ENCODE measurements at regions of chr11 and their contacts with region 1.

Region 1: GRCh38 chr11:74388678-74389327 is 9.4 kb downstream of the PGM2L1 start:
- DNase-seq: peak; percentile 67
- H3K4me3 Mint-ChIP-seq: no peak overlapping the region
- H3K27ac Mint-ChIP-seq: no peak overlapping the region
- H3K4me1 Mint-ChIP-seq: peaks cover 21% of the 10 kb centered on the region
- H3K27me3 Mint-ChIP-seq: no peaks in the 10 kb centered on the region

Region 2: GRCh38 chr11:74345420-74345819 is 43.4 kb before region 1 on chr11:
- CTCF ChIA-PET with region 1: no interaction called
- POLR2A ChIA-PET with region 1: no interaction called
- DNase-seq: no peak
- H3K4me3 Mint-ChIP-seq: no peak overlapping the region
- H3K27ac Mint-ChIP-seq: no peak overlapping the region
- H3K4me1 Mint-ChIP-seq: peaks cover 2% of the 10 kb centered on the region
- H3K27me3 Mint-ChIP-seq: no peaks in the 10 kb centered on the region

Region 3: DNA sequence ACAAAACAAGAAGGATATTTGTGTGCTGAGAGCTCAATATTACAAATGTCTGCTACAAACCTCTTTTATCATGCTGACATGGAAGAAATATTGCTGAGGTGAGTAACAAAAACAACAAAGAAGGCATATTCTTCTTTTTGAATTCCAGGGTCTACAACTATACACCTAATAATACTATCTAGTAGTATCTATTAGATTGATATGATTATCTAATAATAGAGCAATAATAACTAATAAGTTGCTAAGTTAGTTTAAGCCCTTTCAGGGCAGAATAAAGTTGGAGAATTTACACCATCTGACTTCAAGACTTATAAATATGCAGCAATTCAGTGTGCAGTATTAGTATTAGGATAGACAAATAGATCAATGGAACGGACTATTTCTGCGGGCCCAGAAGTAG is 20.8 kb after region 1 on chr11:
- CTCF ChIA-PET with region 1: interaction called, 11 read pairs
- POLR2A ChIA-PET with region 1: no interaction called
- DNase-seq: no peak
- H3K4me3 Mint-ChIP-seq: no peak overlapping the region
- H3K27ac Mint-ChIP-seq: no peak overlapping the region
- H3K4me1 Mint-ChIP-seq: no peaks in the 10 kb centered on the region
- H3K27me3 Mint-ChIP-seq: peaks cover 25% of the 10 kb centered on the region

Region 4: GRCh38 chr11:74437441-74438042 is 48.7 kb after region 1 on chr11:
- CTCF ChIA-PET with region 1: interaction called, 10 read pairs
- POLR2A ChIA-PET with region 1: no interaction called
- DNase-seq: no peak
- H3K4me3 Mint-ChIP-seq: no peak overlapping the region
- H3K27ac Mint-ChIP-seq: no peak overlapping the region
- H3K4me1 Mint-ChIP-seq: no peaks in the 10 kb centered on the region
- H3K27me3 Mint-ChIP-seq: peaks cover 2% of the 10 kb centered on the region

Region 5: GRCh38 chr11:74506823-74507222 is 118.0 kb after region 1 on chr11:
- CTCF ChIA-PET with region 1: no interaction called
- POLR2A ChIA-PET with region 1: no interaction called
- DNase-seq: no peak
- H3K4me3 Mint-ChIP-seq: no peak overlapping the region
- H3K27ac Mint-ChIP-seq: no peak overlapping the region
- H3K4me1 Mint-ChIP-seq: no peaks in the 10 kb centered on the region
- H3K27me3 Mint-ChIP-seq: no peaks in the 10 kb centered on the region

Region 6: GRCh38 chr11:74570266-74571061 is 181.7 kb after region 1 on chr11:
- CTCF ChIA-PET with region 1: interaction called, 13 read pairs
- POLR2A ChIA-PET with region 1: no interaction called
- DNase-seq: peak; percentile 23
- H3K4me3 Mint-ChIP-seq: no peak overlapping the region
- H3K27ac Mint-ChIP-seq: no peak overlapping the region
- H3K4me1 Mint-ChIP-seq: no peaks in the 10 kb centered on the region
- H3K27me3 Mint-ChIP-seq: peaks cover 4% of the 10 kb centered on the region

Measured in activated CD4-positive, alpha-beta memory T cell treated with anti-CD3 and anti-CD28 coated beads, Interleukin-2, amount 10 ng/mL, durations not matched to agents 7 days and 5 days (primary cell).